ENCODE measurements at regions of chr15 and their contacts with region 1.

Region 1: DNA sequence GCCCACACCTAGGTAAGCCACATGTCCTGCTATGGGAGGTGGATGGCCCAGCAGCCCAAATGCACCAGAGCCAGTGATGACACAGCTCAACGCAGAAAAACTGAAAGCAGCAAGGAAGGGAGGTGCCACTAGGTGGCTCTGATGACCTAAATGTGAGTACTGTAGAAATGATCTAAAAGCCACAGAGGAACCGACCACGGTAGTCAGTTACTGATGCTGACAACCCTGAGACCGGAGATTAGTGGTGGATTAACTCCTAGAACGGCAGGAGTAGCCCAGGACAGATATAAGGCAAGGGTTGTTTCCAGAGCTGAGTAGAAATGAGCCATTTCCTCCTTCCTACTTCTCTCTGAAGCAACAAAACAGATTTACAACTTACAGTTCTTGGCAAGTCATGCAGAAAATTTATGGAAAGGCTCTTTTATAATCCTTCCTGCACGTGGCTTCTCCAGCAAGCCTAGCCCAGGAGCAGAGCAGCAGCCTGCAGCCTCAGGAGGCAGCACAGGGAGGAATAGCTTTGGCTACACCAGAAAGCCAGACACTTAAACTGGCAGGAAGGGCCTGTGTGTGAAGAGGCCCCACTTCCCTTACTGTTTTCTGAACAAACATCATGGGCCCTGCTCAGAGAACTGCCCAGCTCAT is 13.1 kb downstream of the FBXL22 start:
- DNase-seq: peak; percentile 61
- ATAC-seq: peak; percentile 97
- H3K4me3 ChIP-seq: no peak overlapping the region
- H3K27ac ChIP-seq: peak overlapping the region; percentile 78
- H3K4me1 ChIP-seq: peaks cover 16% of the 10 kb centered on the region
- H3K27me3 ChIP-seq: no peaks in the 10 kb centered on the region
- CTCF ChIP-seq: peak; percentile 80 to 93 (median 89)
- EP300 ChIP-seq: no peak
- POLR2A ChIP-seq: no peak
- RAD21 ChIP-seq: peak; percentile 92

Region 2: GRCh38 chr15:63626955-63627354 is 16.6 kb after region 1 on chr15:
- CTCF ChIA-PET with region 1: interaction called, 36 read pairs
- POLR2A ChIA-PET with region 1: interaction called, 5 read pairs
- RAD21 ChIA-PET with region 1: interaction called, 27 read pairs
- SMC1A ChIA-PET with region 1: interaction called, 18 read pairs
- in situ Hi-C with region 1: no loop called
- intact Hi-C with region 1: no loop called
- DNase-seq: peak; percentile 56
- ATAC-seq: peak; percentile 93
- H3K4me3 ChIP-seq: no peak overlapping the region
- H3K27ac ChIP-seq: peak overlapping the region; percentile 80
- H3K4me1 ChIP-seq: peaks cover 18% of the 10 kb centered on the region
- H3K27me3 ChIP-seq: no peaks in the 10 kb centered on the region
- CTCF ChIP-seq: no peak
- EP300 ChIP-seq: no peak
- POLR2A ChIP-seq: no peak
- RAD21 ChIP-seq: no peak

Region 3: DNA sequence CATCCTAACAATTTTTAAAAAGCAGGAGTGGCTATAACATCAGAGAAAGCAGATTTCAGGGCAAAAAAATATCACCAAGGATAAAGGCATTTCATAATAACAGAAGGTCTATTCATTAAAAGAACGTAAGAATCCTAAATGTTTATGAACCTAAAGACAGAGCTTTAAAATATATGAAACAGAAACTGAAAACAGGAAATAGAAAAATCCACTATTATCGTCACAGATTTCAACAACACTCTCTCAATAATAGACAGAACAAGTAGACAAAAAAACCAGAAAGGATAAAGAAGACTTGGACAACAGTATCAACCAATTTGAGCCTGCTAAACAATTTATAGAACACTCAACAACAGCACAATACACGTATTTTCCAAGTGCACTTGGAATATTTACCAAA is 58.3 kb after region 1 on chr15:
- CTCF ChIA-PET with region 1: interaction called, 14 read pairs
- POLR2A ChIA-PET with region 1: no interaction called
- RAD21 ChIA-PET with region 1: no interaction called
- SMC1A ChIA-PET with region 1: interaction called, 5 read pairs
- in situ Hi-C with region 1: no loop called
- intact Hi-C with region 1: no loop called
- DNase-seq: no peak
- ATAC-seq: peak; percentile 87
- H3K4me3 ChIP-seq: peak overlapping the region; percentile 26
- H3K27ac ChIP-seq: peak overlapping the region; percentile 79
- H3K4me1 ChIP-seq: peaks cover 11% of the 10 kb centered on the region
- H3K27me3 ChIP-seq: no peaks in the 10 kb centered on the region
- CTCF ChIP-seq: no peak
- EP300 ChIP-seq: no peak
- POLR2A ChIP-seq: no peak
- RAD21 ChIP-seq: no peak

Region 4: GRCh38 chr15:63683343-63683951 is 73.1 kb after region 1 on chr15:
- CTCF ChIA-PET with region 1: interaction called, 10 read pairs
- POLR2A ChIA-PET with region 1: no interaction called
- RAD21 ChIA-PET with region 1: interaction called, 4 read pairs
- SMC1A ChIA-PET with region 1: interaction called, 9 read pairs
- in situ Hi-C with region 1: no loop called
- intact Hi-C with region 1: no loop called
- DNase-seq: no peak
- ATAC-seq: no peak
- H3K4me3 ChIP-seq: no peak overlapping the region
- H3K27ac ChIP-seq: no peak overlapping the region
- H3K4me1 ChIP-seq: no peaks in the 10 kb centered on the region
- H3K27me3 ChIP-seq: no peaks in the 10 kb centered on the region
- CTCF ChIP-seq: no peak
- EP300 ChIP-seq: no peak
- POLR2A ChIP-seq: no peak
- RAD21 ChIP-seq: no peak

Region 5: DNA sequence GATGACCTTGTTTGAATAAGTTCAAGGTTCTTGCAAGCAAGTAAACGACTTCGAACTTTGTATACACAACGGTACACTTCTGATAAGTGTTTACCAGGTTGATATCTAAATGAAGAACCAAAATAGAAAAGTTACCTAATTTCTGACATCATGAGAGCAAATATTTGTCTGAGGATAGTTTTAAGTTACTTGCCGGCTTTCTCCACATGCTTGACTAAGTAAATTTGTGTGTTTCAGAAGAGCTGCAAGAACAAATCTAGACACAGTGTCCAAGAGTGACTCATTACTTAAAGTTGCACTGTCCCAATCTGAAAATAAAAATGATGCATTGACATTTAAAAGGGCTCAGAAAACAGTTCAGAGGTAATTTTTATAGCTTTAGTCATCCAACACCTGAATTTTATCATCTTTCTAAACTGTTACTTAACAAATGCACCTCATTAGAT is 108.3 kb after region 1 on chr15:
- CTCF ChIA-PET with region 1: interaction called, 11 read pairs
- POLR2A ChIA-PET with region 1: interaction called, 3 read pairs
- RAD21 ChIA-PET with region 1: interaction called, 3 read pairs
- SMC1A ChIA-PET with region 1: interaction called, 3 read pairs
- in situ Hi-C with region 1: no loop called
- intact Hi-C with region 1: no loop called
- DNase-seq: no peak
- ATAC-seq: no peak
- H3K4me3 ChIP-seq: no peak overlapping the region
- H3K27ac ChIP-seq: no peak overlapping the region
- H3K4me1 ChIP-seq: peaks cover 3% of the 10 kb centered on the region; the same call in 1 of the 2 replicates
- H3K27me3 ChIP-seq: no peaks in the 10 kb centered on the region
- CTCF ChIP-seq: no peak
- EP300 ChIP-seq: no peak
- POLR2A ChIP-seq: no peak
- RAD21 ChIP-seq: no peak

Region 6: DNA sequence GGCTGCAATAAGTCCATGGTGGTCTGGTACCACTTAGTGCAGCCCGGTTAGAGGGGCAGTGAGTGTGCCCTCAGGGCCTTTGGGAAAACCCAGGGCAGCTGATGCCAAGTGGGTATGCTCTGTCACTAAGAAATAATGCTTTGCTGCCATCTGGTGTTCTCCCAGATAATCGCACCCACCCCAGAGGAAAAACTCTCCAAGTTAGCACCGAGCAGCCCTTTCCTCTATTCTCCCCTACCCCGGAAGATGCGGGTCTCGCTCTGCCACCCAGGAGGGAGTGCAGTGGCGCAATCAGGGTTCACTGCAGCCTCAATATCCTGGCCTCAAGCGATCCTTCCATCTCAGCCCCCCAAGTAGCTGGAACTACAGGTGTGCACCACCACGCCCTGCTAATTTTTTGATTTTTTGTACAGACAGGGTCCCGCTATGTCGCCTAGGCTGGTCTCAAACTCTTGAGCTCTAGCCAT is 457.3 kb after region 1 on chr15:
- CTCF ChIA-PET with region 1: interaction called, 87 read pairs
- POLR2A ChIA-PET with region 1: no interaction called
- RAD21 ChIA-PET with region 1: interaction called, 14 read pairs
- SMC1A ChIA-PET with region 1: interaction called, 42 read pairs
- in situ Hi-C with region 1: loop called (anchors 5 kb)
- intact Hi-C with region 1: loop called (anchors 1 kb)
- DNase-seq: peak; percentile 40
- ATAC-seq: peak; percentile 94
- H3K4me3 ChIP-seq: no peak overlapping the region
- H3K27ac ChIP-seq: no peak overlapping the region
- H3K4me1 ChIP-seq: peaks cover 13% of the 10 kb centered on the region
- H3K27me3 ChIP-seq: no peaks in the 10 kb centered on the region
- CTCF ChIP-seq: peak; percentile 72 to 83 (median 77)
- EP300 ChIP-seq: no peak
- POLR2A ChIP-seq: no peak
- RAD21 ChIP-seq: peak; percentile 89

Measured in GM12878 (cell line).